CD8-positive, alpha-beta T cell (primary cell): ENCODE measurements at regions of chr14 and their contacts with region 1.

Region 1: DNA sequence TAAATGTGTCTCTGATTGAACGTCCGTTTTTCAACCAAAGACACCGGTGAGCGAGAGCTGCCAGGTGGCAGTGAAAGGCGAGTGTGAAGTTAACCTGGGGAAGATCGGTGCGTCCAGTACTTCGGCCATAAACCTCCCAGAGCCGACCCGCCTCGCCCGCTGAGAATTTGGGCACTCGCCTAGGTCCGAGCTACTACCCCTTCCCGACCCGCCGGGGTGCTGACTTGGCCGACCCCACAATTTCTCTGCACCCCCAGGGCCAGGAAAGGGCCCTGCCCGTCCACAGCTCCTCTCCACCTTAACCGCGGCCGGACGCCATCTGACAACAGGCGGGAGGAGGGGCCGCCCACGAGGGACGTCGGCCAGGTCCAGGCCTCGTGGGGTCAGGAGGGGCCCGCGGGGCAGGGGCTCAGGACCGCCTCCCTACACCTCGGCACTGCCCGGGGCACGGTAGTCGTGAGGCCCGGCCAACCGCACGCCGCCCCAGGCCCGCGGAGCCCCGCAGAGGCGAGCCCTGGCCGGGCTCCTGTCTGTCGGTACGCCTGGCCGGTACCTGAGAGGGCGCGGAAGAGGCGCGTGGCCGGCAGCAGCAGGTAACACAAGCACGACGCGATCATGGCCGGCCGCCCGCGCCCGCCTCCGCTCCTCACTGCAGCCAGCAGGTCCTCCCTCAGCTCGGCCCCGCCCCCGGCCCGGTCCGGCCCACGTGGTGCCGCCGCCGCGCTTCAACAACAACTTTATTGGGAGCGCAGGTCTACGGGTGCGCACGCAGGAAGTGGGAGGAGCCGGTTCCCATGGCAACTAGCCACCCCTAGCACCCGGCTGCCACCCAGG is at the start of gene ANGEL1:
- DNase-seq: peak; percentile 95 to 99 (median 98)
- ATAC-seq: peak; percentile 90
- H3K4me3 ChIP-seq: peak within 1 kb of the TSS; percentile 73 to 90
- H3K4me3 Mint-ChIP-seq: peak within 1 kb of the TSS; percentile 95
- H3K27ac ChIP-seq: peak within 1 kb of the TSS; percentile 61 to 91
- H3K27ac Mint-ChIP-seq: peak within 1 kb of the TSS; percentile 89
- H3K4me1 ChIP-seq: peaks cover 22% of the 10 kb centered on the region
- H3K4me1 Mint-ChIP-seq: peaks cover 33% of the 10 kb centered on the region
- H3K27me3 ChIP-seq: no peaks in the 10 kb centered on the region
- H3K27me3 Mint-ChIP-seq: no peaks in the 10 kb centered on the region
- CTCF ChIP-seq: no peak
- total RNA-seq, gene ANGEL1: 6.4 to 6.6 TPM

Region 2: DNA sequence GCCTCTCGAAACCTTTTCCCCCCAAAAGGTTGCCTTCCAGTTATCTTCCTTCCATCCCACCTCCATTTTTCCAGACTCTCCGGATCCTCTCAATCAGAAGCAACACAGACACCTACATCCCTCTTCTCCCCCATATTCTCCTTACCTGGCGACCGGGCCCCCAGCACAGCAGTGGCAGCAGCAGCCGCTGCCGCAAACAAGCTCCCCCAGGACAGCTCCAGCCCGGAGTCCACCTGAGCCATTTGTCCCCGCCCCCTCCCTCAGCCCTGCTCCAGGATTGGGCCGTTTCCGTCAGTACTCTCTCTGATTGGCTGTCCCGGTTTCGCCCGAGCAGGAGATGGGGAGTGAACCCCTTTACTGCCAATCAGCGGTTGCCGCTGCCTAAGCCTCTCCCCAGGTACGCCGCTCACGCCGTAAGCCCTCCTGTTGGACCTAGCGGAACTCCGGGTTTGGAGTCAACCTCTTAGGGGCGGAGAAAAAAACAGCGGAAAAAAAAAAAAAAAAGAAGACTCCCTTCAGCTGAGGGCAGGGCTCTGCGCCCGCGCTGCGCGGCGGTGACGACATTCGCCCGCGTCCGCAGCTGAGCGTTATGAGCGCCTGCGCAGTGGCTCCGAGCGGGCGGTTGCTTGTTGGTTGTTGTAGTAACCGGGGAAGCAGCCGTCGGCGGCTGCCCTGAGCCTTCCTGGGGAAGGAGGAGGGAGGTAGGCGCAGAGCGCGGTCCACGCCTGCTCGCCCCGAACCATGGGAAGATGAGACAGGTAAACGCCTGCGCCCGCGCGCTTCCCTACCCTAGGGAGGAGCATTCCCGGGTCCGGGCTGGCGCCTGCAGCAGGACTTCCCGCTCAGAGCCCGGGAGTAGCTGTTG is 1151.6 kb before region 1 on chr14 and contains the starts of genes ERG28 and TTLL5:
- CTCF ChIA-PET with region 1: no interaction called
- POLR2A ChIA-PET with region 1: no interaction called
- intact Hi-C with region 1: loop called in 1 of 2 experiments (anchors 5 kb)
- DNase-seq: peak; percentile 94 to 99 (median 95)
- ATAC-seq: peak; percentile 93
- H3K4me3 ChIP-seq: peak within 1 kb of the TSS; percentile 86 to 87
- H3K4me3 Mint-ChIP-seq: peak within 1 kb of the TSS; percentile 98
- H3K27ac ChIP-seq: peak within 1 kb of the TSS; percentile 85 to 93
- H3K27ac Mint-ChIP-seq: peak within 1 kb of the TSS; percentile 97
- H3K4me1 ChIP-seq: peaks cover 10% of the 10 kb centered on the region
- H3K4me1 Mint-ChIP-seq: peaks cover 36% of the 10 kb centered on the region
- H3K27me3 ChIP-seq: no peaks in the 10 kb centered on the region
- H3K27me3 Mint-ChIP-seq: no peaks in the 10 kb centered on the region
- CTCF ChIP-seq: no peak
- total RNA-seq, gene ERG28: 6.6 to 6.7 TPM
- total RNA-seq, gene TTLL5: 17.6 to 17.7 TPM

Region 3: DNA sequence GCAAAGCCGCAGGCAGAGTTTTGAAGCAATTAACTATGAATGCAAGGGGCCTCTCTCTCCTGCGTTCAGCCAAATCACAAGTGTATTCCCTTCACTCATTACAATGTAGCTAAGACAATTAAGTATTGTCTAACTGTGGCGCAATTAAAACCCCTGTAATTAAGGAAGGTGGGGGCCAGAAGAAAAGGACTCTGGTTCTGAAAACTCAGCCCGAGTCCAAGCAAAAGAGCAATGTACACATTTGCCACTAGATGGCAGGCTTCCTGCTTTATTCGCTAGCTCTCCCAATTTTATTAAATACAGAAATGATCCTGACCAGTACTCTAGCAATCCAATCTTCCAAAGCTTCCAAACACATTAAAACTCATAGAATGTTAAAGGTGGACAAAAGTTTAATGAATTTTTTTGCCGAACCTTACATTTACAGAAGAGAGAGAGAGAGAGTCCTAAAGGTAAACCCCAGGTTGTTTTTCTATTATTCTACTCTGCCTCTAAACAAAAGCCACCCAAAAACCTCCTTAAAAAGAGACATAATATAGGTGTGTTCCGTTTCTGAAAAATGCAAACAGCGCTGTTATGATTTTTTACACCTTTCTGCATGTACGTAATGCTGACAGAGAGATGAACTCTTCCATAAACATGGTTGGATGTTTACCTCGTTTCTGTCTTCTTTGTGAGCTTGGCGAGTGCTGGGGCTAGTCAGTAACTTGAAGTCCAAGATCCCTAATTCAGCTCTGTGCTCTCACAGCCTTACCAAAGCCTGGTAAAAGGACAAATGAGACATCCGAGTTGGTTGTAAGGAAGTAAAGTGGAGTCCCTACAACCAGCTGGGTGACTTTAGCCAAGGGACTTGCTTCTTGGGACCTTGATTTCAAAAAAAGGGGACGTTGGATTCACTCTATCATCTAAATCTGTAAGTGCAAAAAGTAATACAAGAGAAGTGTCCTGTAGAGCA is 102.1 kb before region 1 on chr14:
- CTCF ChIA-PET with region 1: interaction called, 12 read pairs
- POLR2A ChIA-PET with region 1: no interaction called
- intact Hi-C with region 1: no loop called
- DNase-seq: peak in 4 of 9 experiments; percentile 23 to 62 (median 44)
- ATAC-seq: no peak
- H3K4me3 ChIP-seq: no peak overlapping the region
- H3K4me3 Mint-ChIP-seq: no peak overlapping the region
- H3K27ac ChIP-seq: no peak overlapping the region
- H3K27ac Mint-ChIP-seq: no peak overlapping the region
- H3K4me1 ChIP-seq: no peaks in the 10 kb centered on the region
- H3K4me1 Mint-ChIP-seq: no peaks in the 10 kb centered on the region
- H3K27me3 ChIP-seq: no peaks in the 10 kb centered on the region
- H3K27me3 Mint-ChIP-seq: peaks cover 13% of the 10 kb centered on the region
- CTCF ChIP-seq: peak; percentile 63

Region 4: DNA sequence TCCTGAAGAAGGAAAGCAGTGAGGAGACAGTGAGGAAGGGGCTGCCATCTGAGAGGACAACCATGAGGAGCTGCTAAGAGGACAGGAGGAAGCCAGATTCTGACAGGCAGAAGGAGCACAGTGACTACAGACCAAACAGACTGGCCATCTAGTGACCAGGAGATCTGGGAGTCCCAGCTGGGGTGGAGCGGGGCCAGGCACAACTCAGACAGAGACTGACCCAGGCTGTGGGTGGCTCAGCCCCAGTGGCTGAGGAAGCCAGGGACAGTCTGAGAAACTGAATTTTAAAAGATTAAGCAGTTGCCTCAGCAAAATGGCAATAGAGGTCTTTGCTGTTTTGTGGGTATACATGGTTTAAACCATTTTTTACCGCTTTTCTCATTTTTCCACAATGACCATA is 42.6 kb after region 1 on chr14:
- CTCF ChIA-PET with region 1: no interaction called
- POLR2A ChIA-PET with region 1: no interaction called
- intact Hi-C with region 1: no loop called
- DNase-seq: no peak
- ATAC-seq: no peak
- H3K4me3 ChIP-seq: no peak overlapping the region
- H3K4me3 Mint-ChIP-seq: no peak overlapping the region
- H3K27ac ChIP-seq: no peak overlapping the region
- H3K27ac Mint-ChIP-seq: no peak overlapping the region
- H3K4me1 ChIP-seq: no peaks in the 10 kb centered on the region
- H3K4me1 Mint-ChIP-seq: no peaks in the 10 kb centered on the region
- H3K27me3 ChIP-seq: no peaks in the 10 kb centered on the region
- H3K27me3 Mint-ChIP-seq: peaks cover 19% of the 10 kb centered on the region
- CTCF ChIP-seq: no peak

Region 5: GRCh38 chr14:76956316-76957090 is 144.1 kb after region 1 on chr14:
- CTCF ChIA-PET with region 1: no interaction called
- POLR2A ChIA-PET with region 1: no interaction called
- intact Hi-C with region 1: loop called in 1 of 2 experiments (anchors 2 kb)
- DNase-seq: peak; percentile 70 to 95 (median 85)
- ATAC-seq: peak; percentile 63
- H3K4me3 ChIP-seq: peak overlapping the region; percentile 62 to 74
- H3K4me3 Mint-ChIP-seq: peak overlapping the region; percentile 84
- H3K27ac ChIP-seq: peak overlapping the region; percentile 93 to 95
- H3K27ac Mint-ChIP-seq: peak overlapping the region; percentile 97
- H3K4me1 ChIP-seq: peaks cover 52% of the 10 kb centered on the region
- H3K4me1 Mint-ChIP-seq: peaks cover 61% of the 10 kb centered on the region
- H3K27me3 ChIP-seq: no peaks in the 10 kb centered on the region
- H3K27me3 Mint-ChIP-seq: no peaks in the 10 kb centered on the region
- CTCF ChIP-seq: no peak

Region 6: GRCh38 chr14:77097700-77098528 is 285.5 kb after region 1 on chr14 and contains the start of gene CIPC:
- CTCF ChIA-PET with region 1: interaction called, 4 read pairs
- POLR2A ChIA-PET with region 1: interaction called, 7 read pairs
- intact Hi-C with region 1: loop called (anchors 1 kb)
- DNase-seq: peak; percentile 97 to 100 (median 99)
- ATAC-seq: peak; percentile 89
- H3K4me3 ChIP-seq: peak within 1 kb of the TSS; percentile 95 to 97
- H3K4me3 Mint-ChIP-seq: peak within 1 kb of the TSS; percentile 92
- H3K27ac ChIP-seq: peak within 1 kb of the TSS; percentile 97
- H3K27ac Mint-ChIP-seq: peak within 1 kb of the TSS; percentile 98
- H3K4me1 ChIP-seq: peaks cover 16% of the 10 kb centered on the region
- H3K4me1 Mint-ChIP-seq: peaks cover 44% of the 10 kb centered on the region
- H3K27me3 ChIP-seq: no peaks in the 10 kb centered on the region
- H3K27me3 Mint-ChIP-seq: no peaks in the 10 kb centered on the region
- CTCF ChIP-seq: no peak
- total RNA-seq, gene CIPC: 6.0 to 6.3 TPM

Region 7: DNA sequence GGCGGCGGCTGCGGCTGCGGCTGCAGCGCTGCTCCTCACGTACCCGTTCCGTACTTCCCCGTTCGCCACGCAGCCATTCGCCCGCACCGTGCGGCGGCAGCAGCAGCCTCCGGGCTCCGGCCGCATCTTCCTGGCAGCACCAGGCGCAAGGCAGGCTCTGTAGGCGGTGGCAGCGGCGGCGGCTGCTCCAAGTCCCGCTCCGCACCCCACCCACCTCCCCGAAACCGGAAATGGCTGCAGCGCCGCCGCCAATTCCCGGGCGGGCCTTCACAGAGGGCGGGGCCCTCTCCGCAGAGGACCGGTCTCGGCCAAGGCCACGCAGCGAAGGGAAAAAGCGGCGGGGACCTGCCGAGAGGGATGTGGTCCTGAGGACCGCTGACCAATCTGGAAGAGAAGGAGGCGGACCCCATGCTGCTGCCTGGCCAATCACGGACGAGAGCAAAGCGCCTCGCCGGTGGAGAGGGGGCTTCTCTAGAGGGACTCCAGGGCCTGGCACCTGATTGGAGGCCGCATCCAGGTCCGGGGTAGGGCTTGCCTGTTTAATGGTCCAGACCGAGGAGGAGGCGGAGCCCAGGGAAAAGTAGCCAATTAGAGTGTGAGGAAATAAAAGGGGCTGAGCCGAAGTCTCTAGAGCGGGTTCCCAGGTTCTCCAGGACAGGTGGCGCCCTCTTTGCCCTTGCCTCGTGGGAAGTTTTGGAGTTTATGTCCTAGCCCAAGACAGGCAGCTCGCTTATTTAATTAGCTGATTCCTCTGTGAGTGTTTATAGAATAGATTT is 804.2 kb after region 1 on chr14 and contains the start of gene SPTLC2:
- CTCF ChIA-PET with region 1: no interaction called
- POLR2A ChIA-PET with region 1: no interaction called
- intact Hi-C with region 1: loop called in 1 of 2 experiments (anchors 10 kb)
- DNase-seq: peak; percentile 92 to 99 (median 97)
- ATAC-seq: peak; percentile 96
- H3K4me3 ChIP-seq: peak within 1 kb of the TSS; percentile 75
- H3K4me3 Mint-ChIP-seq: peak within 1 kb of the TSS; percentile 90
- H3K27ac ChIP-seq: peak within 1 kb of the TSS; percentile 58 to 69
- H3K27ac Mint-ChIP-seq: peak within 1 kb of the TSS; percentile 87
- H3K4me1 ChIP-seq: peaks cover 12% of the 10 kb centered on the region
- H3K4me1 Mint-ChIP-seq: peaks cover 40% of the 10 kb centered on the region
- H3K27me3 ChIP-seq: no peaks in the 10 kb centered on the region
- H3K27me3 Mint-ChIP-seq: no peaks in the 10 kb centered on the region
- CTCF ChIP-seq: no peak
- total RNA-seq, gene SPTLC2: 14.4 to 15.8 TPM